HepG2 (cell line): ENCODE measurements at regions of chr9 and their contacts with region 1.

Region 1: GRCh38 chr9:135480071-135480941 is 724 bp downstream of the PPP1R26 start:
- DNase-seq: peak; percentile 38
- ATAC-seq: peak; percentile 69
- H3K4me3 ChIP-seq: peak overlapping the region; percentile 93 to 97 (median 95)
- H3K27ac ChIP-seq: peak overlapping the region; percentile 75
- H3K4me1 ChIP-seq: peaks cover 49% of the 10 kb centered on the region
- H3K27me3 ChIP-seq: no peaks in the 10 kb centered on the region; a peak in 1 of 5 replicates
- CTCF ChIP-seq: no peak; the same call in 1 of the 2 replicates
- EP300 ChIP-seq: no peak
- POLR2A ChIP-seq: peak; percentile 24 to 50; a peak in 2 of 4 replicates
- RAD21 ChIP-seq: no peak

Region 2: GRCh38 chr9:135376511-135377265 is 103.6 kb before region 1 on chr9:
- CTCF ChIA-PET with region 1: no interaction called
- POLR2A ChIA-PET with region 1: no interaction called
- in situ Hi-C with region 1: no loop called
- intact Hi-C with region 1: no loop called
- DNase-seq: no peak
- ATAC-seq: no peak
- H3K4me3 ChIP-seq: no peak overlapping the region
- H3K27ac ChIP-seq: no peak overlapping the region
- H3K4me1 ChIP-seq: no peaks in the 10 kb centered on the region
- H3K27me3 ChIP-seq: peaks cover 7 to 51% of the 10 kb centered on the region in 2 experiments; a peak in 3 of 5 replicates
- CTCF ChIP-seq: no peak
- EP300 ChIP-seq: no peak
- POLR2A ChIP-seq: no peak
- RAD21 ChIP-seq: no peak

Region 3: DNA sequence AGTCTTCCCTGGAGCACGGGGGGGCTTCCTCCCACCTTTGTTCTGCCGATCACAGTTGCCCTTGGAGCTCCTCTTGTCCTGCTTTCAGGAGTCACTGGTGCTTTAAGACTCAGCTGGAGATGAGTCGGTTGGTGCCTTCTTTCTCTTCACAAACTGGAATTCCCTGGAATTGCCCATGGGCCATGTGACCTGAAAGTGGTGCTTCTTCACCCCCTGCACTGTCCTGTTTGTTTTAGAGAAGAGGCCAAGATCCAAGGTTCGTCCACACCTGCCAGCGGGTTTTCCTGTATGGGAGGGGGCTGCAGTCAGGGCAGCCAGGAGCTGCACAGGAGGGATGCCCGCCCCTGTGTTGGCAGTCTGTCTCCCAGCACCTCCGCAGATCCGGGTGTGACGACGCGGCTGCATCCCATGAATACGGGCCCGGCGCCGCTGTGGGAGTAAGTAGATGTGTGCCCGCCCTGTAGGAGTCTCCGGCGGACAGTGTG is 10.7 kb after region 1 on chr9:
- CTCF ChIA-PET with region 1: no interaction called
- POLR2A ChIA-PET with region 1: interaction called, 16 read pairs
- in situ Hi-C with region 1: no loop called
- intact Hi-C with region 1: no loop called
- DNase-seq: peak; percentile 68
- ATAC-seq: peak; percentile 85
- H3K4me3 ChIP-seq: peak overlapping the region; percentile 27 to 42 (median 37); a peak in 5 of 6 replicates
- H3K27ac ChIP-seq: peak overlapping the region; percentile 61
- H3K4me1 ChIP-seq: peaks cover 43% of the 10 kb centered on the region
- H3K27me3 ChIP-seq: no peaks in the 10 kb centered on the region
- CTCF ChIP-seq: no peak
- EP300 ChIP-seq: peak in 1 of 2 experiments; percentile 41; a peak in 1 of 4 replicates
- POLR2A ChIP-seq: no peak
- RAD21 ChIP-seq: no peak

Region 4: DNA sequence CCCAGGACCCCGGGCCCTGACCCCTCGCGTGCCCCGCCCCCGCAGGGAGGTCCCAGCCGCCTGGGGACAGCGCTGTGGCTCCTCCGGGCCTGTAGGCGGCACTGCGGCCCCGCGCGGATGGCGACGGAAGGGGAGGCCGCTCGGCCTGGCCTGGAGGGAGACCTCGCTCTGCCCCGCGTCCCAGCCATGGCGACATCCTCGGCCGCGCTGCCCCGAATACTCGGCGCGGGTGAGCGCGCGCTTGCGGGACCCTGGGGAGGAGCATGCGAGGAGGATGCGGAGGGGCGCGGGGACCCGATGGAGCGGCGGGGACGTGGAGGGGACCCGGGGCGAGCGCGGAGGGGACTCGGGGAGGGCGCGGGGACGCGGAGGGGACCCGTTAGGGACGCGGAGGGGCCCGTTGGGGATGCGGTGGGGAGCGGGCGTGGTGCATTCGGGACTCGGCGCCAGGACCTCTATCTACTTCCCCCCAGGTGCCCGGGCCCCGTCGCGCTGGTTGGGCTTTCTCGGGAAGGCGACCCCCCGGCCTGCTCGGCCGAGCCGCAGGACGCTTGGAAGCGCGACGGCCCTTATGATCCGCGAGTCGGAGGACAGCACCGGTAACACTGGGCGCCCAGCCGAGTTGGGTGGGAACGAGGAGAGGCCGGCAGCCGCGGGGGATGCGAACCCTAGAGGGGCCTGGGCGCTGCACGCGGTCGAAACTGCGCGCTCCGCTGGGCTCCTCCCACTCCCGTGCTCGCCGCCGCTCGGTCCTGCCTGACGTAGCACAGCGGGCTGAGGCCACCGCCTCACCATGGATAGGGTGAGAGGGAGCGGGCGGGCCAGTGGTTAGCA is 20.4 kb after region 1 on chr9 and contains the start of gene MRPS2:
- CTCF ChIA-PET with region 1: no interaction called
- POLR2A ChIA-PET with region 1: interaction called, 12 read pairs
- in situ Hi-C with region 1: no loop called
- intact Hi-C with region 1: loop called (anchors 2 kb)
- DNase-seq: peak; percentile 78
- ATAC-seq: peak; percentile 92
- H3K4me3 ChIP-seq: peak within 1 kb of the TSS; percentile 80 to 96 (median 92)
- H3K27ac ChIP-seq: peak within 1 kb of the TSS; percentile 67
- H3K4me1 ChIP-seq: peaks cover 24% of the 10 kb centered on the region
- H3K27me3 ChIP-seq: no peaks in the 10 kb centered on the region
- CTCF ChIP-seq: peak; percentile 96
- EP300 ChIP-seq: 0 out of 4 replicates have a peak, but pooled peaks of 1 of the 2 experiments have one; percentile 14
- POLR2A ChIP-seq: peak in 1 of 2 experiments; percentile 2; a peak in 2 of 4 replicates
- RAD21 ChIP-seq: peak; percentile 58
- total RNA-seq, gene MRPS2: 44.4 and 48.6 TPM in 2 replicates